ENCODE measurements at regions of chr17 and their contacts with region 1.

Region 1: DNA sequence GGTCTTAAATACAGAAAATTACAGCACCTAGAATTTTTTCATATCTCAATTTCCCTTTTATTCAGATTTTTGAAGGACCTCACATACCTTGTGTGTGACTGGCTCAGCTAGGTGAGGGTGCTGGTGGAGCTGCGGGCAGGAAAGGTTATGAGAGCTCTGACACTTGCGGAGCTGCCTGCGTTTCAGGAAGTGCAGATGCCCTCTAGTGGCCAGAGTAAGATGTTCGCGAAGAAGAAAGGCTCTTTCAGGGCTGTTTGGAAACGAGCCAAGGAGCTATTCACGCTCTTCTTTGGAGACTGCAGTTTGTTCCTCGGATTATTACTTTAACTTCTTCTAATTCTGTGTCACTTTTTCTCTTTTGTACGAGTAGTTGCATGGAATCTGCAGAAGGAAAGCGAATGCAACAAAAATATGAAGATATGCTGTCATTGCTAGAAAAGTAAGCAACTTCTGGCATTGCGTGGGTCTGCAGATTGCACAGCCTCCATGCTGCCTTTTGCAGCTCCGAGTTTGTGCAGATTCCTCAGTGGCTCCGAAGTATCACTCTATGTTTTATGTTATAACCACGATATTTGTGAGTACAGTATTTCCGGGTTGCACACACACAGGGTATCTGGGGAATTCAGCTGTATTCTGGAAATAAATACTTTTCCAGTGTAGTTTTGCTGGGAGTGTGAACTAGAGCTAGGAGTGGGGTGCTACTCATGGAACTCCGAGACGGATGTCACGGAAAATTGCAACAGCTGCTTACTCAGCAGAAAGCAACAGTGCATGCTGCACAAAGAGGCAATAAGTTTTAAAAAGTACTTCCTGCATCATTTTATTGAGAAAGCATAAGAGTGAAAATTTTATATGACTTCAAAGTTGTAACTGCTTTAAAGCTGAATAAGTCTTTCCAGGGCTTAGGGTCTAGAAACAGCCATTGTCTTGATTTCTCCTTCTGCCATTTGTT is 46.3 kb downstream of the DNAH9 start:
- DNase-seq: peak; percentile 57
- H3K4me3 Mint-ChIP-seq: no peak overlapping the region
- H3K27ac Mint-ChIP-seq: no peak overlapping the region
- H3K4me1 Mint-ChIP-seq: no peaks in the 10 kb centered on the region
- H3K27me3 Mint-ChIP-seq: no peaks in the 10 kb centered on the region
- CTCF ChIP-seq: peak; percentile 30

Region 2: GRCh38 chr17:11608396-11608795 is 36.1 kb before region 1 on chr17:
- CTCF ChIA-PET with region 1: no interaction called
- intact Hi-C with region 1: loop called (anchors 5 kb)
- DNase-seq: peak; percentile 23
- H3K4me3 Mint-ChIP-seq: no peak overlapping the region
- H3K27ac Mint-ChIP-seq: no peak overlapping the region
- H3K4me1 Mint-ChIP-seq: no peaks in the 10 kb centered on the region
- H3K27me3 Mint-ChIP-seq: no peaks in the 10 kb centered on the region
- CTCF ChIP-seq: no peak

Region 3: GRCh38 chr17:11705111-11705510 is 60.6 kb after region 1 on chr17:
- CTCF ChIA-PET with region 1: no interaction called
- intact Hi-C with region 1: no loop called
- DNase-seq: peak; percentile 2
- H3K4me3 Mint-ChIP-seq: no peak overlapping the region
- H3K27ac Mint-ChIP-seq: no peak overlapping the region
- H3K4me1 Mint-ChIP-seq: no peaks in the 10 kb centered on the region
- H3K27me3 Mint-ChIP-seq: no peaks in the 10 kb centered on the region
- CTCF ChIP-seq: no peak

Measured in Calu3 (cell line).